Esophagus muscularis mucosa (tissue), 4 donors: ENCODE measurements at regions of chr9 and their contacts with region 1.

Region 1: GRCh38 chr9:94805585-94805984 is 79.1 kb downstream of the AOPEP start:
- DNase-seq: no peak
- H3K4me3 ChIP-seq: no peak overlapping the region
- H3K27ac ChIP-seq: peak overlapping the region; percentile 16 to 65 (median 54)
- H3K4me1 ChIP-seq: peaks cover 40 to 66% (median 47%) of the 10 kb centered on the region in 4 donors
- H3K27me3 ChIP-seq: no peaks in the 10 kb centered on the region
- CTCF ChIP-seq: no peak
- EP300 ChIP-seq: no peak
- POLR2A ChIP-seq: no peak

Region 2: DNA sequence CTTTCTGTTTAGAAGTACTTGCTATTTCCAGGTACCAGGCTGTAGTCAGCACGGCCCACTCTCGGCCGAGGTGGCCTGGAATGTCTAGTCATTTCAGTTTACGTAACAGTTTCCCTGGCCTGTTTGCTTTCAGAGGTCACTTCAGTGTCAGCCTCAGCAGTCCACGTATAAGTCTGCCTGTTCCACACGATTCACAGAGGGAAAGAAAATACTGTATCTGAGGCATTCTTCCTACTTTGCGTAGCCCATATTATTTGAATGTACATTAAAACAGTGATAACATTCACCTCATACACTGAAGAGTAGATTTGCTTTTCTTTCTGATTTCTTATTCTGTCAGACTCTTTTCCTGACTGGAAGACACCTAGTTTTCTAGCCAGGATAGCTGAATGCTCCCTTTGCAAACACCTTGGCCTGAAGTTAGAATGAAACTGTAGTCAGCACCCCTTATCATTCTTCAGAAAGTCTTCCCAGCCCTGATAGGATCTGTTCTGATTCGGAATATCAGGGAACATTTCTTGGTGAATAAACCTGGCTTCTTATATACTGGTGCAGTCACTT is 61.8 kb after region 1 on chr9:
- intact Hi-C with region 1: loop called (anchors 5 kb)
- DNase-seq: no peak
- H3K4me3 ChIP-seq: peak overlapping the region in 2 of 4 donors; percentile 1 to 17
- H3K27ac ChIP-seq: peak overlapping the region; percentile 80 to 88 (median 86)
- H3K4me1 ChIP-seq: peaks cover 50 to 73% (median 64%) of the 10 kb centered on the region in 4 donors
- H3K27me3 ChIP-seq: no peaks in the 10 kb centered on the region
- CTCF ChIP-seq: no peak
- EP300 ChIP-seq: no peak
- POLR2A ChIP-seq: no peak